Activated CD4-positive, alpha-beta T cell treated with anti-CD3 and anti-CD28 coated beads, Interleukin-2, amount 10 ng/mL, durations not matched to agents 24 days and 14 days (primary cell): ENCODE measurements at regions of chr2 and their contacts with region 1.

Region 1: DNA sequence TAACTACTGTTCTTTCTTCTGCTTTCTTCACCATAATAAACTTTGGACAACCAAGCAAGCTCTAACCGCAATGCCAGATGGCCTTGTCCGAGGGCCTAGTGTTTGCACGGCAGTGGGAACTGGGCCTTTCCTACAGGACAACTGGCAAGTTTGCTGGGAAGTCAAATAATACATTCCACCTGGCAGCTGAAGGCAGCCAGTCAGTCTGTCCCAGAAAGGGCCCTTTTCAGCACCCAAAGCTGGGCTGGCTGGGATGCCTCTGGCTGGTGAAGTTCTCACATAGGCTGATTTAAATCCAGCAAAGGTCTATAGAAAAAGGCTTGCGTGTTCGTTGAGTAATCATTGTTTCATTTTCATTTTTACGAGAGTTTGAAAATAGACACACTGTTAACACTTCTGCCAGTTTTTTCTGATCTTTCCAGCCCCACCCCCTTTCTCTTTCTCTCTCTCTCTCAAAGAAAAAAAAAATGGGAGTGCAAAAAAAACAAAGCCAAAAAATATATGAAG is 110.0 kb upstream of the EPAS1 start:
- DNase-seq: peak; percentile 84
- H3K4me3 Mint-ChIP-seq: peak overlapping the region; percentile 80
- H3K27ac Mint-ChIP-seq: peak overlapping the region; percentile 88
- H3K4me1 Mint-ChIP-seq: peaks cover 13% of the 10 kb centered on the region
- H3K27me3 Mint-ChIP-seq: peaks cover 2% of the 10 kb centered on the region

Region 2: DNA sequence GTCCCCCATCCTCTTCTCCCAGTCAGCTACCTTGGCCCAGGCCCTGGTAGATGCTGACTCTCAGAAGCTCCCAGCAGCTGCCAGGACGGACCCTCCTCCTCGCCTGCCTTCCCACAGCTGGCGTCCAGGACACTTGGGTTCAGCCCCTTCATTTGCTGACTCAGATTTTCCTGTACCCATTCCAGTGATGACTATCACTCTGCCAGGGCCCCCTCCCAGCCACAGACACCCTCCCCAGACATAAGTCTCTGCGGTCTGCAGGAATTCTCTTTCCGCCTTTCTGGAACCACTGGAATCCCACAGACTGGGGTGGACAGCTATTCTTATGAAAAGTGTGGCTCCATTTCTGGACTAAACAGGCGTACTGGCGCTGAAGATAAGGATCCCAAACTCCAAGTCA is 150.2 kb before region 1 on chr2:
- intact Hi-C with region 1: no loop called
- DNase-seq: no peak
- H3K4me3 Mint-ChIP-seq: no peak overlapping the region
- H3K27ac Mint-ChIP-seq: no peak overlapping the region
- H3K4me1 Mint-ChIP-seq: peaks cover 11% of the 10 kb centered on the region
- H3K27me3 Mint-ChIP-seq: no peaks in the 10 kb centered on the region

Region 3: GRCh38 chr2:46067851-46068305 is 119.3 kb before region 1 on chr2:
- intact Hi-C with region 1: loop called (anchors 2 kb)
- DNase-seq: no peak
- H3K4me3 Mint-ChIP-seq: no peak overlapping the region
- H3K27ac Mint-ChIP-seq: no peak overlapping the region
- H3K4me1 Mint-ChIP-seq: peaks cover 23% of the 10 kb centered on the region
- H3K27me3 Mint-ChIP-seq: no peaks in the 10 kb centered on the region

Region 4: GRCh38 chr2:46134531-46135181 is 52.5 kb before region 1 on chr2:
- intact Hi-C with region 1: no loop called
- DNase-seq: no peak
- H3K4me3 Mint-ChIP-seq: no peak overlapping the region
- H3K27ac Mint-ChIP-seq: no peak overlapping the region
- H3K4me1 Mint-ChIP-seq: no peaks in the 10 kb centered on the region
- H3K27me3 Mint-ChIP-seq: no peaks in the 10 kb centered on the region